ENCODE measurements at regions of chr2 and their contacts with region 1.

Region 1: DNA sequence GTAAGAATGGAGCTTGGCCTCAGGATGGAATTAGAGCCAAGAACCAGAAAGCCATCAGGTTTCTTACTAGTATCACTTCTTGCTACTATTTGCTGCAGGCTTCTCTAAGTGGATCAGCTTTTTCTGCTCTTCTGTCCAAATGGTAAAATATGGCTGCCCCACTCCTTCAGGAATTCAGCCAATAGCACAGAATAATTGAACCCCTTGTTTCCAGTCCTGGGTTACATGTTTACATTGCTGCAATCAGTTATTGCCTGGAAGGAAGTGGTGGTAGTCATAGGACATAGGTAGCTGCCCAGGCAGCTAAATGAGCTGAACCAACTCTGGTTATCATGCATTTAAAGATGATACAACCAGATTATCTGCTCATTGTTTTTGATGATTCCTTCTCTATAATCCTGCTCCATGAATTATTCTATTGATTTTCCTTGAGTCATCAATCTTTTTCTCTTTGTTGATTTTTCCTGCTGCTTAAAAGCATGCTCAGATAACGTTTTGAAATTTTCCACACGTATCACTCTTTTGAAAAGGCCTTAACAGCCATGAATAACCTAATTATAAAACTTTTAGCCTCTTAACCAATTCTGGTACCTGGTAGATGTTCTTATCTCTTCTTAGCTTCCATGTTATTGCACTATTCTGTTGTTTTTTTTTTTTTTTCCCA is 12.6 kb downstream of the AGPS start:
- DNase-seq: peak; percentile 65
- H3K4me3 ChIP-seq: no peak overlapping the region
- H3K27ac ChIP-seq: peak overlapping the region; percentile 7
- H3K4me1 ChIP-seq: peaks cover 40% of the 10 kb centered on the region
- H3K27me3 ChIP-seq: no peaks in the 10 kb centered on the region
- CTCF ChIP-seq: no peak
- POLR2A ChIP-seq: peak; percentile 58

Region 2: DNA sequence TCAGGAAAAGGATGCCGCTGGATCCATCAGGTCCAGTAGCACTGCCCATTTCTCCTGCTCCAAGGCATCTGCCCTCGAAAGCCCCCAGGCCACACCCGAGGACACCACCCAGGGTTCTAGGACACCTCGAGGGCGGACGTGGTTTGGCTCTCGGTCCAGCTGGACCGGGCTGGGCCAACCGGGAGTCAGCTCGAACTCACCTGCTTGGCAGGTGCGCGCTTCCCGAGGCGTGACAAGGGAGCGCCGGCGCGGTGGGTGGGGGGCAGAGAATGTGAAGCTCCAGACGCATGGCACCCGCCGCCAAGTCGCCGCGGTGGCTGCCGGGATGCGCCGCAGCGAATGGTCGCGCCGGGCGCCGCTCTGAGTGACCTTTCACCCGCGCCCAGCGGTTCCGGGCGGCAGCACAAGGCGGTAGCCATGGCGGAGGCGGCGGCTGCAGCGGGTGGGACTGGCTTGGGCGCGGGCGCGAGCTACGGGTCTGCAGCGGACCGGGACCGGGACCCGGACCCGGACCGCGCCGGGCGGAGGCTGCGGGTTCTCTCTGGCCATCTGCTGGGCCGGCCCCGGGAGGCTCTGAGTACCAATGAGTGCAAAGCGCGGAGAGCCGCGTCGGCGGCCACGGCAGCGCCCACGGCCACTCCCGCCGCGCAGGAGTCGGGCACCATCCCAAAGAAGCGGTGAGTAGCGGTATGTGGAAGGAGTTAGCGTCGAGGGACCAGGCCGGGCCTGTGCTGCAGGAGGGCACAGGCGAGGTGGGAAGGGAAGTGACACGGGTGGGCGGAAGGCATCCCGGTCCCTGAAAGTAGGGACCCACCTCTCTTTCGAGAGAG is 12.6 kb before region 1 on chr2 and contains the start of gene AGPS:
- CTCF ChIA-PET with region 1: interaction called, 15 read pairs
- POLR2A ChIA-PET with region 1: no interaction called
- dilution Hi-C with region 1: no loop called
- intact Hi-C with region 1: no loop called
- DNase-seq: peak; percentile 72
- H3K4me3 ChIP-seq: peak within 1 kb of the TSS; percentile 56 to 99 (median 96)
- H3K27ac ChIP-seq: peak within 1 kb of the TSS; percentile 91
- H3K4me1 ChIP-seq: peaks cover 49% of the 10 kb centered on the region
- H3K27me3 ChIP-seq: no peaks in the 10 kb centered on the region
- CTCF ChIP-seq: no peak
- POLR2A ChIP-seq: peak; percentile 85
- total RNA-seq, gene AGPS: 88.8 and 96.5 TPM in 2 replicates

Region 3: DNA sequence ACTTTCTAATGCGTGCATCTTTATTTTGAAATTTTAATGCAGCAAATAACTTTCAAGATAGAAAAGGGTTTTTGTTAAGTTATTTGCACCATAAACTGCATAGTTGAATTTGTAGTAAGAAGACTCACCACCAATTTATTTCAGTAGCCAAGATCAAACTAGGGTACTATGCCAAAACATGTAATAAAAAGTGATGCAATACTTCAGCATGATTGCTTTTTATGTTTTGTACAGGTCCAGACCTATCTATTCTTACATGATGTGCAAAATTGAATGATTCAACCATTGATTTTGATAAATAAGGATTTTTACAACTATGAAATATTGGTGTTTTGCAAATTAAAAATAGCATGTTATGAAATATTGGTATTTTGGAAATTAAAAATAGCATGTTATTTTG is 14.1 kb after region 1 on chr2:
- CTCF ChIA-PET with region 1: interaction called, 23 read pairs
- POLR2A ChIA-PET with region 1: no interaction called
- dilution Hi-C with region 1: no loop called
- intact Hi-C with region 1: loop called (anchors 1 kb)
- DNase-seq: no peak
- H3K4me3 ChIP-seq: no peak overlapping the region
- H3K27ac ChIP-seq: no peak overlapping the region
- H3K4me1 ChIP-seq: peaks cover 26% of the 10 kb centered on the region
- H3K27me3 ChIP-seq: no peaks in the 10 kb centered on the region
- CTCF ChIP-seq: no peak
- POLR2A ChIP-seq: no peak

Region 4: DNA sequence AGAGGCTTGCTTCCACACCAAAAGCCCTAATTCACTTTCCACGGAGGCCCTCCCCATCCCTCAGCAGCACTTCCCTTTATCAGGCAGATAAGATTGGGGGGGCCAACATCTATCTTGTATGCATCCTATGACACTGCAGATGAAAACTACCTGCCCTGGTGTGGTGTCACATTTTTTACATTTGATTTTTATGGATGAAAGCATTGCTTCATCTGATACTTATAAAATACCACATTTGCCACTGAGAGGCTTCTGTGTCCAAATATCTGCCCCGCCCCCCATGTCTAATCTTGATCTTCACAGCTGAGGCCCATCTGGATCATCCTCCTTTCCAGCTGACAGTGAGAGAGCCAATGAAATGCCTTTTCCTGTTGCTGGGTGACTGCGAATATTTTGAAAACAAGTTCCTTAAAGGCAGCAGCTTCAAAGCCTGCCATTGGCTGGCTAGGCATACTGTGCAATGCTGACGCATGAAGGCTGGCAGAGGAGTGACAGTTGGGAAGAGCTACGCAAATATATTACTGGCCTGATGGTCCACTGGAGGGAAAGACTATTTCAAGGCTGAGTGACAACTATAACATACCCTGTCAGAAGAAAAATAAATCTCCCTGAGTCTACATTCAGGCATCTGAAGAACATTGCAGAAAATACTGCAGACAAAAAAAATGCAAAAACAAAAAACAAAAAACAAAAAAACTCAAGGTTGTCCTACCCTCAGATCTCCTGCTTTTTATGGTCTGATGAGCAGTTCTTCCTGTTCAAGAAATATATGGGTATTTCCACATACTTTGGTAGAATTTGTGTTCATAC is 348.7 kb after region 1 on chr2:
- CTCF ChIA-PET with region 1: no interaction called
- POLR2A ChIA-PET with region 1: no interaction called
- dilution Hi-C with region 1: no loop called
- intact Hi-C with region 1: no loop called
- DNase-seq: peak; percentile 34
- H3K4me3 ChIP-seq: no peak overlapping the region
- H3K27ac ChIP-seq: no peak overlapping the region
- H3K4me1 ChIP-seq: peaks cover 16% of the 10 kb centered on the region
- H3K27me3 ChIP-seq: no peaks in the 10 kb centered on the region
- CTCF ChIP-seq: no peak
- POLR2A ChIP-seq: no peak